CD8-positive, alpha-beta T cell (primary cell): ENCODE measurements at regions of chr18 and their contacts with region 1.

Region 1: GRCh38 chr18:79528846-79529245 is 133.1 kb downstream of the NFATC1 start:
- DNase-seq: peak; percentile 58 to 82 (median 76)
- ATAC-seq: peak; percentile 51
- H3K4me3 ChIP-seq: no peak overlapping the region
- H3K4me3 Mint-ChIP-seq: no peak overlapping the region
- H3K27ac ChIP-seq: no peak overlapping the region
- H3K27ac Mint-ChIP-seq: no peak overlapping the region
- H3K4me1 ChIP-seq: peaks cover 18% of the 10 kb centered on the region
- H3K4me1 Mint-ChIP-seq: peaks cover 17% of the 10 kb centered on the region
- H3K27me3 ChIP-seq: no peaks in the 10 kb centered on the region
- H3K27me3 Mint-ChIP-seq: no peaks in the 10 kb centered on the region
- CTCF ChIP-seq: peak; percentile 96

Region 2: DNA sequence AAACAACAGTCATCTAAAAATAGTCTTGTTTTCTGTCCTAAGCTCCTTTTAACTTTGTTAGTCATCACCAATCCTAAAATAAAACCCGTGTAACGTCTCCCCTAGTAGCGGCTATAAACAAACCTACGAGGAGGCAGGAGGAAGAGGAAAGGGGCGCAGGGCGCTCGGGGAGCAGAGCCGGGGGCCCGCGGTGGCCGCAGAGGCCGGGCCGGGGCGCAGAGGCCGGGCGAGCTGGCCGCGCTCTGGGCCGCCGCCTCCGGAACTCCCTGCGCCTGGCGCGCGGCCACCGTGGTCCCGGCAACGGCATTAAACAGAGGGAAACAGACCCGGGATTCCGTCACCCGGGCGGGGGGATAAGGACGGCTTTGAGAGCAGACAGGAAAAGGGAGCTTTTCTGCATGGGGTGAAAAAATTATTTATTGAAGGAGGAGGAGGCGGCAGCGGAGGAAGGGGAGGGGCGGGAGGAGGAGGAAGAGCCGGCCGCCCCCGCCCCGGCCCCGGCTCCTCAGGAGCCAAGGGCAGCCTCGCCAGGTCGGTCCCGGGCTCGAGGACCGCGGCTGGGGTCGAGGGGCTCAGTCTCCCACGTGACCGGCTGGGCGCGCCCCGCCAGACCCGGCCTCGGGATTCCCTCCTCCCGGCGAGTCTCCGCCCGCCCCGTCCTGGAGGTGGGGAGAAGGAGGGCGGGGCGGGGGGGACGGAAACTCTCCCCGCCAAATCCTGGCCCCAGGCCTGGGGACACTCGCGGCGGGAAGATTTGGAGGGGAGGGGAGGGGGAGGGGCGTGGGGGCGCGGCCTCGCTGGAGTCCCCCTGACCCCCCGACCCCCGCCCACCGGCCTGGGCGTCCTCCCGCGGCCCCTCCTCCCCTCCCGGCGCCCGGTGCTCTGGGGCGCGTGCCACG is 135.0 kb before region 1 on chr18:
- CTCF ChIA-PET with region 1: interaction called, 16 read pairs
- POLR2A ChIA-PET with region 1: interaction called, 7 read pairs
- intact Hi-C with region 1: no loop called
- DNase-seq: peak in 5 of 9 experiments; percentile 40 to 69 (median 59)
- ATAC-seq: peak; percentile 15
- H3K4me3 ChIP-seq: peak overlapping the region; percentile 45 to 59
- H3K4me3 Mint-ChIP-seq: peak overlapping the region; percentile 80
- H3K27ac ChIP-seq: peak overlapping the region in 1 of 2 experiments; percentile 24
- H3K27ac Mint-ChIP-seq: peak overlapping the region; percentile 46
- H3K4me1 ChIP-seq: peaks cover 25% of the 10 kb centered on the region
- H3K4me1 Mint-ChIP-seq: peaks cover 33% of the 10 kb centered on the region
- H3K27me3 ChIP-seq: peaks cover 0 to 14% of the 10 kb centered on the region in 2 experiments
- H3K27me3 Mint-ChIP-seq: peaks cover 4% of the 10 kb centered on the region
- CTCF ChIP-seq: no peak

Region 3: DNA sequence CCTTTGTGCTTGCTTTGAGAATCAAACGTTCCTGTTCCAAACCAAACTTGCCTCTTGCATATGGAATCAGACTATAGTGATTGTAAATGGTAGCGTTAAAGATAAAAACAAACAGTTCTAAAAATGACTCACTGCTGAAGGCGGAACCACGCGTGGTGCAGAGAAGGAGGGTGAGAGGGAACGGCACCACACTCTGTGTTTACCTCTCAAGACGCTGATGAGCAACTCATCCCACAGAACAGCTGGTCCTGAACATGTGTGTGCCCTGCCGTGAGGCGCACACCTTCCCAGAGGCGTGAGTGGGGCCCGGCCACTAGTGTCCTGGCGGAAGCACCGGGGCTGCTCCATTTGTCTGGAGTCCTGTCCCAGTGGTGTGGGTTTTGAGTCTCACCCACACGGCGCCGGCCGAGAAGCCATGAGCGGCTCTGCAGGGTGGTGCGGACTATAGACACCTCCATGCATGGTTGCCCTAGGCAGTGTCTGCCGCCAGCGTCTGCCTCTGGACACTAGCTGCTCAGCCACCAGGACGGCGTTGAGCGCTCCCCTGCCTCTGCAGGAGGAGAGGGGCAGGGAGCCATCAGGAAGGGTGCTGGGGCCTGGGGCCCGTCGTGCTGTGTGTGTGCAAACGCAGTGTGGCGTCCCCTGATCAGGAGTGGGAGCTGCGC is 81.0 kb before region 1 on chr18:
- CTCF ChIA-PET with region 1: no interaction called
- POLR2A ChIA-PET with region 1: interaction called, 3 read pairs
- intact Hi-C with region 1: loop called in 1 of 2 experiments (anchors 5 kb)
- DNase-seq: no peak
- ATAC-seq: no peak
- H3K4me3 ChIP-seq: no peak overlapping the region
- H3K4me3 Mint-ChIP-seq: no peak overlapping the region
- H3K27ac ChIP-seq: no peak overlapping the region
- H3K27ac Mint-ChIP-seq: no peak overlapping the region
- H3K4me1 ChIP-seq: no peaks in the 10 kb centered on the region
- H3K4me1 Mint-ChIP-seq: peaks cover 11% of the 10 kb centered on the region
- H3K27me3 ChIP-seq: no peaks in the 10 kb centered on the region
- H3K27me3 Mint-ChIP-seq: no peaks in the 10 kb centered on the region
- CTCF ChIP-seq: no peak

Region 4: GRCh38 chr18:79458131-79458838 is 70.6 kb before region 1 on chr18:
- CTCF ChIA-PET with region 1: no interaction called
- POLR2A ChIA-PET with region 1: no interaction called
- intact Hi-C with region 1: loop called (anchors 5 kb)
- DNase-seq: no peak
- ATAC-seq: no peak
- H3K4me3 ChIP-seq: no peak overlapping the region
- H3K4me3 Mint-ChIP-seq: no peak overlapping the region
- H3K27ac ChIP-seq: no peak overlapping the region
- H3K27ac Mint-ChIP-seq: no peak overlapping the region
- H3K4me1 ChIP-seq: no peaks in the 10 kb centered on the region
- H3K4me1 Mint-ChIP-seq: peaks cover 7% of the 10 kb centered on the region
- H3K27me3 ChIP-seq: no peaks in the 10 kb centered on the region
- H3K27me3 Mint-ChIP-seq: no peaks in the 10 kb centered on the region
- CTCF ChIP-seq: no peak

Region 5: DNA sequence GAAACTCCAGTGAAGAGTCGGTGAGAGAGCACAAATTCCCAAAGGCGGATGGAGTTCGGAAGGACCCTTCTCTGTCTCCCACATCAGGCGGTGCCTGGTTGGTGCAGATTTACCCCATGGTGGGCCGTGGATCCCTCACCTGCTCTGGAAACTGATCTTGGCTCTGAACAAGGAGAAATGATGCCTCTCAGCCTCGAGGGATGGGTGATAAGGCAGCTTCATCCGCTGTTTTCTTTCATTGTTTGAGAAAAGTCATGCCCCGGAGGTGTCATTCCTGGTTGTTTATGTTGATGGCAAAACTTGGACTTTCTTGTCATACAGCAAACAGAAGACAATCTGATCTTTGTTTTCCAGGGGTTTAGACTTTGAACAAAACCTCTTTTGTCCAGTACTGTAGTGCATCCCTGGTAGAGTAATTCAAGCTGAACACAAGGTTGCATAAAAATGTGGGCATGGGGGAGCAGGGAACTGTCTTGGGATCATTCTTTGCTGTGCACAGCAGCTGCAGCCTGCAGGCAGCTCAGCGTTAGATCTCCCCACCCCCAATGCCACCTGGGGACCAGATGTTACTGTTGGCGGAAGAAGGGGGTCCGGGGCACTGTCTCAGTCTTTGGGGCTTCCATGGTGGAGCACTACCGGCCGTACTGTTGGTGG is 51.8 kb before region 1 on chr18:
- CTCF ChIA-PET with region 1: no interaction called
- POLR2A ChIA-PET with region 1: no interaction called
- intact Hi-C with region 1: loop called in 1 of 2 experiments (anchors 5 kb)
- DNase-seq: no peak
- ATAC-seq: no peak
- H3K4me3 ChIP-seq: no peak overlapping the region
- H3K4me3 Mint-ChIP-seq: no peak overlapping the region
- H3K27ac ChIP-seq: no peak overlapping the region
- H3K27ac Mint-ChIP-seq: peak overlapping the region; percentile 81
- H3K4me1 ChIP-seq: peaks cover 14% of the 10 kb centered on the region
- H3K4me1 Mint-ChIP-seq: peaks cover 18% of the 10 kb centered on the region
- H3K27me3 ChIP-seq: no peaks in the 10 kb centered on the region
- H3K27me3 Mint-ChIP-seq: no peaks in the 10 kb centered on the region
- CTCF ChIP-seq: no peak

Region 6: DNA sequence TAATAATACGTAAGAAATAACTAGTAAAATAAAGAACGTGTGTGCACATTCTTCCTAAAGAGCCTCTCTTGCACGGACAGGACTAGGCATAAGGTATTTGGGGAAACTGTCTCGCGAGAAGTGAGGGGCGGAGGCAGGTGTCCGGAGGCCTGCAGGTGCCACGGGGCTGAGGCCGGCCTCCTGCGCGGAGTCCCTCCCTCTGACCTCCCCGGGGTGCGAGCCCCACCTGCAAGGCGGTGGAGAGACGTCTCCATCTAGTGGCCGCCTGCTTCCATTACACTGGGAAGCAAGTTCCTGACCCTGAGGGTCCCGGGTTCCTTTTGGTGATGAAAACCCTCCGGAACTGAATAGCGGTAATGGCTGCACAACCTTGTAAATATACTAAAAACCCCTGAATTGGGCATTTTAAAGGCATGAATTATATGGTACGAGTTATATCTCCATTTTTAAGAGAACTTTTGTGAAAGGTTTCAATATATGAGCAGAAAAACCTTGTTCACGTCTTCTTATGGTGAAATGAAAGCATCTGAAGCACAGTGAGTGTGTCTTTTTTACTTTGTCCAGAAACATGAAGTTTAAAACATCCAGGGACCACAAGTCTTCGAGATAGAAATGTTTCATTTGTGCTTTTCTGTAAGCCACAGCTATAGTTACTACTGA is 115.3 kb after region 1 on chr18:
- CTCF ChIA-PET with region 1: interaction called, 7 read pairs
- POLR2A ChIA-PET with region 1: no interaction called
- intact Hi-C with region 1: loop called (anchors 1 to 2 kb)
- DNase-seq: peak; percentile 41 to 80 (median 69)
- ATAC-seq: peak; percentile 85
- H3K4me3 ChIP-seq: no peak overlapping the region
- H3K4me3 Mint-ChIP-seq: no peak overlapping the region
- H3K27ac ChIP-seq: no peak overlapping the region
- H3K27ac Mint-ChIP-seq: no peak overlapping the region
- H3K4me1 ChIP-seq: peaks cover 12% of the 10 kb centered on the region
- H3K4me1 Mint-ChIP-seq: peaks cover 11% of the 10 kb centered on the region
- H3K27me3 ChIP-seq: peaks cover 0 to 3% of the 10 kb centered on the region in 2 experiments
- H3K27me3 Mint-ChIP-seq: peaks cover 15% of the 10 kb centered on the region
- CTCF ChIP-seq: peak; percentile 97

Region 7: GRCh38 chr18:79765491-79766245 is 236.8 kb after region 1 on chr18:
- CTCF ChIA-PET with region 1: no interaction called
- POLR2A ChIA-PET with region 1: no interaction called
- intact Hi-C with region 1: no loop called
- DNase-seq: no peak
- ATAC-seq: no peak
- H3K4me3 ChIP-seq: no peak overlapping the region
- H3K4me3 Mint-ChIP-seq: no peak overlapping the region
- H3K27ac ChIP-seq: no peak overlapping the region
- H3K27ac Mint-ChIP-seq: no peak overlapping the region
- H3K4me1 ChIP-seq: no peaks in the 10 kb centered on the region
- H3K4me1 Mint-ChIP-seq: no peaks in the 10 kb centered on the region
- H3K27me3 ChIP-seq: no peaks in the 10 kb centered on the region
- H3K27me3 Mint-ChIP-seq: peaks cover 13% of the 10 kb centered on the region
- CTCF ChIP-seq: no peak